Activated CD4-positive, alpha-beta T cell treated with anti-CD3 and anti-CD28 coated beads for 36 hours (primary cell): ENCODE measurements at regions of chr17 and their contacts with region 1.

Region 1: DNA sequence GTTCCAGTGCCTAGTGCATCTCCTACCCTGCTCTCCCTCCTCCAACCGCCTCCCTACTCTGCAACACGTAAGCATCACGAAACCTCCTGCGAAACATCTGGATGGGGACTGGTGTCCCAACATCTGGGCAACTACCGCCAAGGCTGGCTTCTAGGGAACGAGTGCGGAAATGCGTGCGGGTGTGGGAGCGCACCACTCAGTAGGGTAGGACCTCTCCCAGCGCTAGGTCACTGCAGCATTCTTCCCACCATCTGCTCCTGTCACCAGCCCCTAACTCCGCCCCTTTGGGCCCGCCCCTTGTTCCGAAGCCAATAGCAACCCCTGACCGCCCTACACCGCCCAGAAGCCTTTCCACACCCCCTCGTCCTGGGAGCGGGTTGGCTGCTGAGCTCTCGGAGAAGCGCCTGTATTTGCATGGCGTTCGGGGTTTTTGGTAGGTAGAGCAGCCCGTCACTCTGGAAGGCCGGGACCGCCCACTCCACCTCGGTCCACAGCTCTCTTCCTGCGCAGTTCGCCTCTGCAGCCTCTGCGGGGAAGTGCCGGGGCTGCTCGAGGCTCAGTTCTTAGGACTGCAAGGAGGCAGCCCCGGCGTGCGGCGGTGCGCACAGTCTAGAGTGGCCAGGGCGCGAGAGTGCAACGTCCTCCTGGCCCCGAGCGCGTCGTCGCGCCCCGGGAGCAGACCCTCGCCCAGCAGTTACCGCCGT is at the start of gene HS3ST3B1:
- DNase-seq: peak; percentile 100
- ATAC-seq: peak; percentile 92
- H3K4me3 Mint-ChIP-seq: peak within 1 kb of the TSS; percentile 81
- H3K27ac Mint-ChIP-seq: peak within 1 kb of the TSS; percentile 90
- H3K4me1 Mint-ChIP-seq: peaks cover 54% of the 10 kb centered on the region
- H3K27me3 Mint-ChIP-seq: peaks cover 30% of the 10 kb centered on the region
- total RNA-seq, gene HS3ST3B1: 5.0 to 5.7 TPM

Region 2: GRCh38 chr17:13594762-13595598 is 705.7 kb before region 1 on chr17:
- CTCF ChIA-PET with region 1: interaction called, 7 read pairs
- POLR2A ChIA-PET with region 1: interaction called, 4 read pairs
- intact Hi-C with region 1: loop called (anchors 1 to 2 kb)
- DNase-seq: peak; percentile 89
- ATAC-seq: peak; percentile 84
- H3K4me3 Mint-ChIP-seq: no peak overlapping the region
- H3K27ac Mint-ChIP-seq: no peak overlapping the region
- H3K4me1 Mint-ChIP-seq: peaks cover 4% of the 10 kb centered on the region
- H3K27me3 Mint-ChIP-seq: peaks cover 29% of the 10 kb centered on the region

Region 3: DNA sequence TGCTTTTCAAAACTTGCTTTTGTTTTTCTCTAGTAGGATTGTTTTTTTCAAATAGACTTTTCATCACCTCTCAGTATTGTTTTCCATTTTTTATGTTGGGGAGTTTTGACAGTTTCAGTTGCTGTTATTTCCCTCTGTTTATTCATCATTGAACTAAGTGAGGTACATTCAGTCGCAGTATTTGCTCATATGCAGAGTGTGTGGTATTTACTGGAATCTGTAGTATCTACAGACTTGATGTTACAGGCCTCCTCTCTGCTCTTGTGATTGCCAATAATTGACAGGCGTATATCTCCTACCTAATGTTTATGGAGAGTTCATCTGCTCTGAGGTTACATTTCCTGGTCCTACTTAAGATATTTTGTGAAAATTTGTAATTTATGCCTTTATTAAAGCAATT is 181.8 kb before region 1 on chr17:
- CTCF ChIA-PET with region 1: interaction called, 3 read pairs
- POLR2A ChIA-PET with region 1: no interaction called
- intact Hi-C with region 1: loop called (anchors 1 to 5 kb)
- DNase-seq: peak; percentile 17
- ATAC-seq: peak; percentile 84
- H3K4me3 Mint-ChIP-seq: no peak overlapping the region
- H3K27ac Mint-ChIP-seq: peak overlapping the region; percentile 92
- H3K4me1 Mint-ChIP-seq: peaks cover 89% of the 10 kb centered on the region
- H3K27me3 Mint-ChIP-seq: no peaks in the 10 kb centered on the region

Region 4: GRCh38 chr17:14245020-14245419 is 55.7 kb before region 1 on chr17:
- CTCF ChIA-PET with region 1: no interaction called
- POLR2A ChIA-PET with region 1: no interaction called
- intact Hi-C with region 1: no loop called
- DNase-seq: no peak
- ATAC-seq: no peak
- H3K4me3 Mint-ChIP-seq: no peak overlapping the region
- H3K27ac Mint-ChIP-seq: no peak overlapping the region
- H3K4me1 Mint-ChIP-seq: no peaks in the 10 kb centered on the region
- H3K27me3 Mint-ChIP-seq: no peaks in the 10 kb centered on the region

Region 5: GRCh38 chr17:14337596-14338079 is 36.9 kb after region 1 on chr17:
- CTCF ChIA-PET with region 1: interaction called, 13 read pairs
- POLR2A ChIA-PET with region 1: interaction called, 3 read pairs
- intact Hi-C with region 1: loop called (anchors 1 to 2 kb)
- DNase-seq: peak; percentile 83
- ATAC-seq: peak; percentile 93
- H3K4me3 Mint-ChIP-seq: no peak overlapping the region
- H3K27ac Mint-ChIP-seq: peak overlapping the region; percentile 76
- H3K4me1 Mint-ChIP-seq: peaks cover 83% of the 10 kb centered on the region
- H3K27me3 Mint-ChIP-seq: no peaks in the 10 kb centered on the region

Region 6: DNA sequence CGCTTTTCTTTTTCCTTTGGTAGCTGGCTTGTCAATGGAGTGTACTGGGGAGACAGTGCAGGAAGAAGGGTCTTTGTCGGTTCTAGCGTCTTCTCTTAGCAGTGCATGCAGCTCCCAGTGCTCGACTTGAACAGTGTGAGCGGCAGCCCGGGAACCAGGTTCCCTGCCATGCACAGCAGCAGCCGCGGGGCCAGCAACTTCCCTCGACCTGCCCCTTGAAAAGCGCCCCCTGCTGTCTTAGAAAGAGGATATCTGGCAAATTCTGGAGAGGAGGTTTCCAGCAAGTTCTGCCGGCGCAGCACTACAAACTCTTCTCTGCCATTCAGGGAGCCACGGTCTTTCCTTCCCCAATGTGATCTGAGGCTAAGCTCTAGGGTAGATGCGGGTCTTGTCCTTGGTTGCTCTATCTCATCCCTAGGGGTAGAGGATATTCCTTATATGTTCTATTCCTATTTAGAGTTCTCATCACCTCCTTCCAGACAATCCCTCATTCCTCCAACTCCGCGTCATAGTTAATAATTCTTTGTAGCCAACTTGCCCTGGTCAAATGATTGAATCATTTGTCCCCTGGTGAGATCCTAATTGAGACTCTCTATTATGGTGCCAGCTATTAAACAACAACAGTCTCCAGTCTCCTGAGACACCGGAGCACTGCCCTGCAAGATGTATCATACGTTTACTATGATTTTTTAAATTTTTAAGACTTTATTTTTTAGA is 513.1 kb after region 1 on chr17:
- CTCF ChIA-PET with region 1: no interaction called
- POLR2A ChIA-PET with region 1: no interaction called
- intact Hi-C with region 1: loop called (anchors 5 to 10 kb)
- DNase-seq: peak; percentile 63
- ATAC-seq: no peak
- H3K4me3 Mint-ChIP-seq: no peak overlapping the region
- H3K27ac Mint-ChIP-seq: no peak overlapping the region
- H3K4me1 Mint-ChIP-seq: peaks cover 16% of the 10 kb centered on the region
- H3K27me3 Mint-ChIP-seq: peaks cover 11% of the 10 kb centered on the region

Region 7: DNA sequence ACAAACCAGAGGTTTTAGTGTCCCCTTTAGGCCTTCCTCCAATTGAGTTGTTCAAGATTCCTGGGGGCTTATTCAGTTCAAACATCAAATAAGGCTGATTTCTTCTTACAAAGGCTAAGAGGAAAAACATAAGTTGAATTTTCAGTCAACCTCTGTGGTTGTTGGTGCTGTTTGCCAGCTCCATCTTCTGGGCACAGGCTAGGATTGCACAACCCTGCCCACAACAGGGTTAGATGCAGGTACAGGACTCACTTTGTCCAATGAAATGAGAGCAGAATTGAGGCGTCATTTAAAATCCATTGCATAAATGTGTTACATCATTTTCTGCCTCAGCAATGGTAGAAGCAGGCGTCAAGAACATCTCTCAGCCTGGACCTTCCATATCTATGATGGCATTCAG is 791.1 kb after region 1 on chr17:
- CTCF ChIA-PET with region 1: no interaction called
- POLR2A ChIA-PET with region 1: no interaction called
- intact Hi-C with region 1: no loop called
- DNase-seq: peak; percentile 6
- ATAC-seq: no peak
- H3K4me3 Mint-ChIP-seq: no peak overlapping the region
- H3K27ac Mint-ChIP-seq: no peak overlapping the region
- H3K4me1 Mint-ChIP-seq: no peaks in the 10 kb centered on the region
- H3K27me3 Mint-ChIP-seq: peaks cover 7% of the 10 kb centered on the region